Stomach (tissue), 19 donors: ENCODE measurements at regions of chr1 and their contacts with region 1.

Region 1: DNA sequence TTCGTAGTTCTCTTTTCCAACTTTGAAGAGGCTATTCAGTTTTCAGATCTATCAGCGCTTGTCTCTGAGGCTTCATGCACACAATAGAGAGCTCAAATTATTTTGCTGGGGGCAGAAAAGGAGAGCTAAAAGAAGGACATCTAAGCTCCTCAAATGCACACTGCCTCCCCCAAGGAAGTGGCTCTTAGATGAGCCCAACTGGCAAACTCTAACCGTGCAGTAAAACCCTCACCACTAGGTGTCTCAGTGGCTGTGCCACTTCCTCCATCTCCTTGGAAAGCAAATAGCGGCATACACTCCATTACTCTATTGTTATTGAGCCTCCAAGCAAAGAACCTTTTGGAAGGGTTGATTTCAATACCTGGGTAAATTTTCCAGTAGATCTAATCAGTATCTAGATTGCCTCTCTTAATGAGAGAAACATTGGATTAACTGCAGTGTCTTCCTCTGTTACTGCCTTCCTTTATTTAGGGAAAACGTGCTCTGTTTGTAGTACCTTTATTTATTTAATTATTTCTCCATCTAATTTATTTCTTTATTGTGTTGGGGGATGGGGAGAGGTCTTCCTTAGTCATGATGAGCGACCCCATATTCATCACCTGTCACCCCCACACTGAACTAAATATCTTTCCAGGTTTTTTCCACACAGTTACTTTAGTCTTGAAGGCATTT is 9.2 kb upstream of the SFPQ start:
- DNase-seq: peak; percentile 71 to 93
- H3K4me3 ChIP-seq: no peak overlapping the region
- H3K27ac ChIP-seq: no peak overlapping the region
- H3K4me1 ChIP-seq: peaks cover 0 to 8% (median 3%) of the 10 kb centered on the region in 4 donors
- H3K27me3 ChIP-seq: no peaks in the 10 kb centered on the region
- CTCF ChIP-seq: peak in 5 of 7 experiments; percentile 67 to 86 (median 79)
- EP300 ChIP-seq: no peak
- POLR2A ChIP-seq: no peak

Region 2: DNA sequence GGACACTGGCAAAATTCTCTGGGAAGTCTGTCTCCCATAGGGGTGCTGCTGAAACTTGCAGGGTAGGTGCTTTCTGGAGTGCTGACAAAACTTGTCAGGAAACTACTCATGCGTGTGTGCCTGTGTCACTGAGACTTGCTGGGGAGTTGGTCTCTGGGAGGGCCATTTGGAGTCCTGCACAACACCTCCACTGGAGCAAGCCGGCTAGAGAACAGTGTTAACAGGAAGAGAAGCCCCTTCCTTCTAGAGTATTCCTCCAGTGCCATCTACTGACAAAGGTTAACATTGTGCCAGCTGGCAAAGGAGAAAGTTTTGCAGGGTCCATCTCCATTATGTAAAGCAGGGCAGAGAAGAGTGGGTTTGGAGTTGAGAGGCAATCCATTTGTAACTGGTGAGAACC is 96.3 kb after region 1 on chr1:
- intact Hi-C with region 1: loop called (anchors 5 kb)
- DNase-seq: peak; percentile 27 to 74
- H3K4me3 ChIP-seq: no peak overlapping the region
- H3K27ac ChIP-seq: no peak overlapping the region
- H3K4me1 ChIP-seq: peaks cover 0 to 24% (median 10%) of the 10 kb centered on the region in 4 donors
- H3K27me3 ChIP-seq: no peaks in the 10 kb centered on the region
- CTCF ChIP-seq: peak in 1 of 7 experiments; percentile 19
- EP300 ChIP-seq: no peak
- POLR2A ChIP-seq: no peak